PC-3 (cell line): ENCODE measurements at regions of chr17 and their contacts with region 1.

Region 1: GRCh38 chr17:29617125-29617480 is 5.6 kb downstream of the CORO6 start:
- DNase-seq: peak; percentile 81
- ATAC-seq: peak; percentile 71
- H3K4me3 ChIP-seq: peak overlapping the region; percentile 66
- H3K27ac ChIP-seq: no peak overlapping the region
- H3K4me1 ChIP-seq: peaks cover 25% of the 10 kb centered on the region
- H3K27me3 ChIP-seq: no peaks in the 10 kb centered on the region
- CTCF ChIP-seq: peak; percentile 81

Region 2: DNA sequence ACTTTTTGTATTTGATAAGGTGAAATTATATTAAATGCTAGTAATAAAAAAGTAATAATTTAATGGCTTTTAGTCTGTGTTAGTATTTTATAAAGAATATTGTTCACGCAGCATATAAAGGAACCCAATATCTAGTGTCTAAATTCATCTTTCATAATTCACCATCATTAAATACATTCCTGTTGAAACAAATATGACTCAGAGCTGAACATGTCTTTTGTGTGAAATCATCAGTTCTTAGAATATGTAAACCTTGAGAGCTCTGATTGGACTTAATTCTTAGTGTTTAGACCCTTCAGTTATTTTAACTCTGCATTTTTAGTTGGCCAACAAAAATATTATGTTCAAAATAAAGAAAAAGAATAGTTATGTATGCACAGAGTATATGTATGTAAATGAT is 122.1 kb before region 1 on chr17:
- CTCF ChIA-PET with region 1: no interaction called
- POLR2A ChIA-PET with region 1: no interaction called
- intact Hi-C with region 1: no loop called
- DNase-seq: peak; percentile 12
- ATAC-seq: no peak
- H3K4me3 ChIP-seq: no peak overlapping the region
- H3K27ac ChIP-seq: no peak overlapping the region
- H3K4me1 ChIP-seq: no peaks in the 10 kb centered on the region
- H3K27me3 ChIP-seq: no peaks in the 10 kb centered on the region
- CTCF ChIP-seq: no peak

Region 3: DNA sequence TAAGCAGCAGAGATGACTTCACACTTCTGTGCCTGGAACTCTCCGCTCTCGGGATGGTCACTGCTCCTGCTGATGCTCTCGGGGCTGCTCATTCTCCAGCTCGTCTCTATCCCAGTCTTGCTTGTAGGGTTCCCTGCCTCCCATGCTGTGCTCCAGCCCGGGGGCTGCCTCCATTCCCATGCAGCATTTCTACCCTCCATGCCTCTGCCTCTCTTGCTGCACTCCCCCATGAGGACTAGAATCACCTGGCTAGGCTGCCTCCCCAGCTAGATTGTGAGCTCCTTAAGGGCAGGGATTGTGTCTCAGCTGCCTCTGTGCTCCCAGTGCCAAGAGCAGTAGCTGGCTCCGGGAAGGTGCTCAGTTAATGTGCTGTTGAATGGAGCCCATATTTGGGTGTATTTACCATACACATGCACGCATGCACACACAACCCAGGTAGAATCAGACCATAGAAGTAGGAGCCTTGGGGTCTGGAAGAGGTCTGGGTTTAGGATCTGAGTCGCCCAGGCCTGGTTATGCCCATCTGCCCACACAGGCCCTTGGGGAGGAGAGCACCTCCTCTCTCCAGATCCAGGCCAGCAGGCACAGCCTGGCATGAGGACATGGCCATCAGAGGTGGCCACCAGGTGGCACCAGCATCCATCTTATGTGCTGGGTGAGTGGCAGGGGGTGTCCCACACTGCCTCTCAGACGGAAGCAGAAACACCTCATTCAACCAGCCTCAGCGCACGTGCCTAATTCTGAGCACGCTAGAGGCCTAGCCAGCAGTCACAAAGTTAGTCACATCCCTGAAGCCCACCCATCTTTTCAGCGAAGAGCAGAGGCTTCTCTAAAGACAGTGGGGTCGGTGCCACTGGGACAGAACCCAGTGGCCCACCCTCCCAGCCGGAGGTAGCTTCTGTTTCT is 37.0 kb before region 1 on chr17:
- CTCF ChIA-PET with region 1: interaction called, 4 read pairs
- POLR2A ChIA-PET with region 1: no interaction called
- intact Hi-C with region 1: loop called (anchors 2 kb)
- DNase-seq: peak; percentile 82
- ATAC-seq: peak; percentile 99
- H3K4me3 ChIP-seq: no peak overlapping the region
- H3K27ac ChIP-seq: no peak overlapping the region
- H3K4me1 ChIP-seq: no peaks in the 10 kb centered on the region
- H3K27me3 ChIP-seq: no peaks in the 10 kb centered on the region
- CTCF ChIP-seq: peak; percentile 83

Region 4: DNA sequence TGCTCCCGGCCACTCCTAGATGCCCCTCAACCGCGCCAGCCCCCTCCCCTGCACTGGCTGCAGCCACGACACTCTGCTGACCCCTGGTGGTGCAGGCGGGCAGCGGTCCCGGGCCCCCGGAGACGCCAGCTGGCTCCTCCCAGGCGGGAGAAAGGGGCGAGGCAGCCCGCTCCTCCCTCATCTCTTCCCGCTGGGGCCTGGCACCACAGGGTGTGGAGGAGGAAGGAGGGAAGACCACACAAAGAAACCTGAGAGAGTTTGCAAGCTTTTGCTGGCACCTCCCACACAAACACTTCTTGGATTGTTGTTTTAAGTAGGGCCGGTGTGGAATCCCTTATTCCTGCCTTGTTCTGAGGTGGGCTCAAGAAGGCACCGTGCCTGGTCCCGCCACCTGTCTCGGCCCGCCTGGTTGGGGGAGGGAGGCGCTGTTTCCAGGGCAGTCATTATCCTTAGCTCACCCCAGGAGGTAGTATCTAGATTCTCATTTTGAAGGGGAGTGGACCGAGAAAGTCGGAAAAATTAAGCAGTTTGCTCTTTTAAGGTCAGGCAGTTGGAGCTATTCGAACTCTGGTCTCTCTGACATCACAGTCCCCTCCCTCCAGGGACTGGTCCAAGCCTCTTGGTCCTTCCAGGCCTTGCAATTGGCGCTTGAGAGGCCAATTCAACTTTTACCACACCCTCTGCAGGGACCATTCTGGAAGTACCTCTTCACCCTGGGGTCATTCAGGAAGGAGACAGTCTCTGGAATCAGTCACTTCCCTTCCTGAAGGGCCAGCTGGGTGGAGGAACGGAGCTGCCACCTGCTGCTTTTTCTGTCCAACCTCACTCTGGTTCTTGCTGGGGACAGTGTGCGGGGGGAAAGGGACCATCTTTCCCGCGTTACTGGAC is 25.1 kb before region 1 on chr17:
- CTCF ChIA-PET with region 1: interaction called, 26 read pairs
- POLR2A ChIA-PET with region 1: no interaction called
- intact Hi-C with region 1: no loop called
- DNase-seq: peak; percentile 80
- ATAC-seq: peak; percentile 63
- H3K4me3 ChIP-seq: peak overlapping the region; percentile 13; the same call in 1 of the 2 replicates
- H3K27ac ChIP-seq: 0 out of 2 replicates have a peak overlapping the region, but pooled peaks have one; percentile 8
- H3K4me1 ChIP-seq: peaks cover 49% of the 10 kb centered on the region
- H3K27me3 ChIP-seq: no peaks in the 10 kb centered on the region
- CTCF ChIP-seq: peak; percentile 83

Region 5: GRCh38 chr17:29628644-29629043 is 11.5 kb after region 1 on chr17:
- CTCF ChIA-PET with region 1: no interaction called
- POLR2A ChIA-PET with region 1: no interaction called
- intact Hi-C with region 1: no loop called
- DNase-seq: no peak
- ATAC-seq: no peak
- H3K4me3 ChIP-seq: no peak overlapping the region
- H3K27ac ChIP-seq: no peak overlapping the region
- H3K4me1 ChIP-seq: peaks cover 8% of the 10 kb centered on the region
- H3K27me3 ChIP-seq: no peaks in the 10 kb centered on the region
- CTCF ChIP-seq: no peak